Activated CD8-positive, alpha-beta T cell treated with anti-CD3 and anti-CD28 coated beads for 36 hours (primary cell): ENCODE measurements at regions of chr13 and their contacts with region 1.

Region 1: DNA sequence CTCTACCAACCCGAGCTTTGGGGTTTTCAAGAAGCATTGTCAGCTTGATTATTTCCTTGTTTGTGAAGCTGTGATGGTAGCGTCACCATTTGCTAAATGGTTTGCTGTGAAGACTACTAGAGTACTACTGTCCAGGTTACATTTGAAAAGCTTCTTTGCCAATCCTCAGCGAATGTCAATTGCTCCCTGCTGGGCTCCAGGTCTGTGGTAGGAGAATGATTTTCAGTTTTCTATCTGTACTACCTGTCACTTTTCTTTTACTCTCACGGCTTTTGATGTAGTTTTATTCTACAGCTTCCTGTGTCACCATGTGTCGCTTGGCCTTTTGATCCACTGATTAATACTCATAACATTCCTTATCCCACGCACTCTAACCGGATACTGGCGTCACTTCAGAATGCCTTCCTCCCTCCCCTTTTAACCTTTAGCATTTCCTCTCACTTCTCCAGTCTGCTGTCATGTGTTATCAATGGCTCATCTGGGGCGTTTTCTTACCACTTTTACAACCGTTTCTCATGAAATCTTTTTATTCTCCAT is 7.5 kb upstream of the GPR183 start:
- DNase-seq: peak; percentile 89
- ATAC-seq: peak; percentile 80
- H3K4me3 Mint-ChIP-seq: peak overlapping the region; percentile 66
- H3K27ac Mint-ChIP-seq: peak overlapping the region; percentile 98
- H3K4me1 Mint-ChIP-seq: peaks cover 78% of the 10 kb centered on the region
- H3K27me3 Mint-ChIP-seq: no peaks in the 10 kb centered on the region
- CTCF ChIP-seq: no peak

Region 2: GRCh38 chr13:99301913-99302636 is 12.6 kb before region 1 on chr13:
- CTCF ChIA-PET with region 1: interaction called, 12 read pairs
- POLR2A ChIA-PET with region 1: interaction called, 6 read pairs
- intact Hi-C with region 1: loop called (anchors 2 kb)
- DNase-seq: no peak
- ATAC-seq: no peak
- H3K4me3 Mint-ChIP-seq: peak overlapping the region; percentile 2
- H3K27ac Mint-ChIP-seq: peak overlapping the region; percentile 78
- H3K4me1 Mint-ChIP-seq: peaks cover 80% of the 10 kb centered on the region
- H3K27me3 Mint-ChIP-seq: no peaks in the 10 kb centered on the region
- CTCF ChIP-seq: no peak

Region 3: GRCh38 chr13:99374994-99375737 is 60.5 kb after region 1 on chr13:
- CTCF ChIA-PET with region 1: no interaction called
- POLR2A ChIA-PET with region 1: no interaction called
- intact Hi-C with region 1: no loop called
- DNase-seq: peak; percentile 42
- ATAC-seq: peak; percentile 41
- H3K4me3 Mint-ChIP-seq: no peak overlapping the region
- H3K27ac Mint-ChIP-seq: peak overlapping the region; percentile 81
- H3K4me1 Mint-ChIP-seq: peaks cover 86% of the 10 kb centered on the region
- H3K27me3 Mint-ChIP-seq: no peaks in the 10 kb centered on the region
- CTCF ChIP-seq: no peak